ENCODE measurements at regions of chrX and their contacts with region 1.

Region 1: GRCh38 chrX:20266810-20267606 is at the start of gene RPS6KA3:
- DNase-seq: peak; percentile 85
- H3K4me3 Mint-ChIP-seq: peak within 1 kb of the TSS; percentile 98
- H3K27ac Mint-ChIP-seq: peak within 1 kb of the TSS; percentile 97
- H3K4me1 Mint-ChIP-seq: peaks cover 20% of the 10 kb centered on the region
- H3K27me3 Mint-ChIP-seq: peaks cover 8% of the 10 kb centered on the region
- total RNA-seq, gene RPS6KA3: 58.8 and 60.6 TPM in 2 replicates

Region 2: DNA sequence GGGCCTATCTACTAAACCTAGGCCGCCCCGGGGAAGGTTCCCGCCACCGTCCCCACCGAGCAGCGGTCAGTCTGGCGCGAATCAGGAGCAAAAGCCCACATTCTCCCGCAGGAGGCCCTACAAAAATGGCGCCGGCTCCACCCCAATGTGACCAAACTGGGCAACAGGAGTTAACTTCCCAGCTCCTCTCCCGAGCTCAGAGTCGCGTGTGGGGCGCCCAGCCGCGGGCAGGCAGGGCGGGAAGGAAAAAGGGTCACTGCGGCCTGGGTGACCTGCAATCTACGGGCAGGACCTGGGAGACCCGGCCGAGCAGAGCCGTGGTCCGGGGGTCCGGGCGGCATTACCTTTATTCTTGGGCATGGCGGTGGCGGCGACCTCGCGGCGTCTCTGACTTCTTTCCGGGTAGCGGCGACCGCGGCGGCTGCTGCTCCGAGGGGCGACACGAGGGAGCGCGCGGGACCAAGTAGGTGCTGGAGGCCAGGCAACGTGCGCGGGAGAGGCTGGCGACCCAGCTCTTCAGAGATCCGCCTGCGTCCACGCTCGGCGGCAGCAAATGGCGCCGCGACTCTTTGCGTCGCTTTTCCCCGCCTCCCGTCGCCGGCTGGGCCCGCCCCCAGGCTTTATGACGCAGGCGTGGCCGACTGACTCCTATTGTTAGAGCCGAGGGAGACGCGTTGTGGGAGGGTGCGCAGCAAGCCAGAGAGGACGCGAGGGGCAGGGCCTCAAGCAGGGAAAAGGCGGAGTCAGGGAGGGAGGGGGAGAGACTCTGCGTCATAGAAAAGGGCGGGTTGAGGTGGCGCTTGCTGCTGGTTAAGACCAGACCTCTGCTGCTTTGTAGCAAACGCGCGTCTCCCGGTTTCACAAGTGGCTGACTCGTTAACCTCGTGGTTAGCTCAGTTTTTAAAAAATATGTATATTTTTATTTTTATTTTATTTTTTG is 125.5 kb before region 1 on chrX and contains the start of gene EIF1AX:
- intact Hi-C with region 1: loop called (anchors 2 kb)
- DNase-seq: peak; percentile 93
- H3K4me3 Mint-ChIP-seq: peak within 1 kb of the TSS; percentile 90
- H3K27ac Mint-ChIP-seq: peak within 1 kb of the TSS; percentile 84
- H3K4me1 Mint-ChIP-seq: peaks cover 29% of the 10 kb centered on the region
- H3K27me3 Mint-ChIP-seq: no peaks in the 10 kb centered on the region
- total RNA-seq, gene EIF1AX: 107 TPM in 2 replicates

Region 3: GRCh38 chrX:20252381-20253231 is 14.4 kb before region 1 on chrX:
- intact Hi-C with region 1: loop called (anchors 1 kb)
- DNase-seq: peak; percentile 49
- H3K4me3 Mint-ChIP-seq: no peak overlapping the region
- H3K27ac Mint-ChIP-seq: peak overlapping the region; percentile 65
- H3K4me1 Mint-ChIP-seq: peaks cover 46% of the 10 kb centered on the region
- H3K27me3 Mint-ChIP-seq: no peaks in the 10 kb centered on the region

Region 4: DNA sequence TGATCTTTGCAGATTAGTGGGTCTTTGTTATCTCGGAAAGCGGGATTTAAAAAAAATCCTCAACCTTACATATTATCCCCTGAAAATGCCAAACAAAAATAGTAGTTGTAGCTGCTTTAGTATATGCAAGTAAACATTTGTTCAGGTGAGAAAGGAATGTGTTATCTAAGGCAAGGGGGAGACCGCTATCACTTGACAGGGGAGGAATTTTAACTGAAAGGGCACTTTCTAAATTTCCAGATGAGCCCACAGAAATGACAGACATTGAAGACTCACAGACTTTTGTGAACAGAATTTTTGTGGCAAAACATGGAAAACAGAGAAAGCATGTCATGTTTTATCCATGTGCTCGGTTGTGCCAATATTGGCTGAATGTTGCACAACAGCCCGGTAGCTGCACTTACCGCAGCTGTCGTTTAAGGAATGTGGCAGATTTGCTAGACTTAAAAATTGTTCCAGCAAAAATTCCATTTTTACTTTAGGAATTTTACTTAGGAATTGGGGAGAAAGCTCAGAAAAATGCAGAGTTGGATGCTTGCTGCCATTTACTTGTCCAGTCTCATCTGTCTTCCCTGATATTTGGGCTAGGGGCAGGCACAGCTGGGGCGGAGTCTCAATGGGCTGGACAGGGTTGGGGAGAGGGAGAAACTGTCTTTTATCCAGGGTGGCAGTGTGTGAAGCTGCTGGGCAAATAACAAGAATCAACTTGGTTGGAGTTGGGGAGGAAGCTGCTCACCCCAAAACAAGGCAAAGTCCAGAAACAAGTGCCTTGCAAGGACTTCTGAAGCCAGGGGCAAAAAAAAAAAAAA is 94.3 kb after region 1 on chrX:
- intact Hi-C with region 1: no loop called
- DNase-seq: no peak
- H3K4me3 Mint-ChIP-seq: no peak overlapping the region
- H3K27ac Mint-ChIP-seq: no peak overlapping the region
- H3K4me1 Mint-ChIP-seq: no peaks in the 10 kb centered on the region
- H3K27me3 Mint-ChIP-seq: peaks cover 18% of the 10 kb centered on the region

Region 5: GRCh38 chrX:20382518-20383297 is 115.7 kb after region 1 on chrX:
- intact Hi-C with region 1: loop called (anchors 2 kb)
- DNase-seq: no peak
- H3K4me3 Mint-ChIP-seq: no peak overlapping the region
- H3K27ac Mint-ChIP-seq: no peak overlapping the region
- H3K4me1 Mint-ChIP-seq: peaks cover 26% of the 10 kb centered on the region
- H3K27me3 Mint-ChIP-seq: no peaks in the 10 kb centered on the region

Region 6: DNA sequence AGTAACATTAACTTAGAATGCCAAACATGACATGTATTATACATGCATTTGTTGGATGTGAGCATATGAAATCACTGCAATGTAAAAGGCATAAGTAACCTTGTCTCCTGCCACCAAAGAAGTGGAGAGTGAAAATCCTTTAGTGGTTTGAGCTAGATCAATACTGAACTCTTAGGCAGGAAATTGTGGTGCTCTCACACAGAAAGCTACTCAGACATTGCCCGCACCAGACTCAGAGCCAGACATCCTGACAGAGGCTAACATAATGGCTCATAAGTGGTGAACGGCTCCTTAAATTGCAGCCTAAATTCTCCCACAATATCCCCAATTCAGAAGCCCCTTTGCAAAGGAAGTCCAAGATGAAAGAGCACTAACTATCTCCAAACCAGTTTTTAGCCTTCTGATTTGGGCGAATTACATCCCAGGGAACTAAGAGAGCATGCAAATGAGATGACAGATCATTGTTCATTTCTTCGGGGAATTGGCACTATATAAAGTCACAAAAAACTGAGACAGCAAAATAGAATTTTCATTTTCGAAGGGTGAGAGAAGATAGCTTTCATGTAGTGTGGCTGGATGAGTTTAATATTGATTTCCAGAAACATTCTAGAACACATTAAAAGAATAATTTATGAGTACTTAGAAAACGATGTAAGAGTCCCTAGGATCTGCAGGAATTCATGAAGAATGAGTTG is 233.3 kb after region 1 on chrX:
- intact Hi-C with region 1: loop called (anchors 5 kb)
- DNase-seq: no peak
- H3K4me3 Mint-ChIP-seq: no peak overlapping the region
- H3K27ac Mint-ChIP-seq: peak overlapping the region; percentile 51
- H3K4me1 Mint-ChIP-seq: peaks cover 31% of the 10 kb centered on the region
- H3K27me3 Mint-ChIP-seq: peaks cover 14% of the 10 kb centered on the region

Region 7: DNA sequence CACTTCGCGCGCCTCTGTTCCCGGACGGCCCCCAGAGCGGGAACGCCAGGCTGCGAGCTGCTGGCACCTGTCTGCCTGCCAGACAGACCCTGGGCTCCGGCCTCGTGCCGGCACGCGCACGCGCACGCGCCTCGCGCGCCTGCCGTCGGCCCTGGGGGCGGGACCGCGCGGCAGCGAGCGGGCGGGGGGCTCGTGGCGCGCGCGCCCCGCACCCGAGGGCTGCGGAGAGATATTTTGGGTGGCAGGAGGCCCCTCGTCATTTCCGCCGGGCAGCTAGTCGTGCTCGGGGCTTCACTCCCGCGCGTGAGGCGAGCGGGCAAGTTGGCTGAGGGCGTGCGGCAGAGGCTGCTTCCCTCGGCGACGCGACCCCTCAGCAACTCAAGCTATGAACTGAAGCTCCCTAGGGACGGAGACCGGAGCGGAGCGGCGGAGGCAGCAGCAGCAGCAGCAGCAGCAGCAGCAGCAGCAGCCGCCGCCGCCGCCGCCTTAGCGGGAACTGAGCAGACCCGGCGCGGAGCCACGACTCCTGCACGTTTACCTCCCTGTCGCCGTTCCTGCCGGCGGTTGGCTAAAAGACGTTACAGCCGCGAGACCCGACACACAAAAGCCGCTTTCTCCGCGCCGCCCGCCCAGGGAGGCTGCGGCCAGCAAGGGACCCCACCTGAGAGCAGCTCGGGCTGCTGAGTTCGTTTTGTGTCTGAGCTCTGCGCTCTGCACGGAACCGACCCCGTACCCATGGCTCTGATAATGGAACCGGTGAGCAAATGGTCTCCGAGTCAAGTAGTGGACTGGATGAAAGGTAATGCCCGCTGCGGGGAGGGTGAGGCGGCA is 1107.4 kb after region 1 on chrX and contains the start of gene CNKSR2:
- intact Hi-C with region 1: loop called (anchors 10 kb)
- DNase-seq: peak; percentile 60
- H3K4me3 Mint-ChIP-seq: peak within 1 kb of the TSS; percentile 91
- H3K27ac Mint-ChIP-seq: peak within 1 kb of the TSS; percentile 40
- H3K4me1 Mint-ChIP-seq: peaks cover 14% of the 10 kb centered on the region
- H3K27me3 Mint-ChIP-seq: peaks cover 6% of the 10 kb centered on the region
- total RNA-seq, gene CNKSR2: 7.4 and 9.1 TPM in 2 replicates

Measured in activated T-helper 1 cell treated with anti-CD3 and anti-CD28 coated beads, Interleukin-12 subunit alpha, Interleukin-12 subunit beta, Interleukin-2, Interleukin-4 antibody, amounts not matched to agents 30 ng/mL and 10 ng/mL and 1 ng/mL, durations not matched to agents 14 hours and 24 hours and 36 hours (primary cell).